ENCODE measurements at regions of chr11 and their contacts with region 1.

Region 1: DNA sequence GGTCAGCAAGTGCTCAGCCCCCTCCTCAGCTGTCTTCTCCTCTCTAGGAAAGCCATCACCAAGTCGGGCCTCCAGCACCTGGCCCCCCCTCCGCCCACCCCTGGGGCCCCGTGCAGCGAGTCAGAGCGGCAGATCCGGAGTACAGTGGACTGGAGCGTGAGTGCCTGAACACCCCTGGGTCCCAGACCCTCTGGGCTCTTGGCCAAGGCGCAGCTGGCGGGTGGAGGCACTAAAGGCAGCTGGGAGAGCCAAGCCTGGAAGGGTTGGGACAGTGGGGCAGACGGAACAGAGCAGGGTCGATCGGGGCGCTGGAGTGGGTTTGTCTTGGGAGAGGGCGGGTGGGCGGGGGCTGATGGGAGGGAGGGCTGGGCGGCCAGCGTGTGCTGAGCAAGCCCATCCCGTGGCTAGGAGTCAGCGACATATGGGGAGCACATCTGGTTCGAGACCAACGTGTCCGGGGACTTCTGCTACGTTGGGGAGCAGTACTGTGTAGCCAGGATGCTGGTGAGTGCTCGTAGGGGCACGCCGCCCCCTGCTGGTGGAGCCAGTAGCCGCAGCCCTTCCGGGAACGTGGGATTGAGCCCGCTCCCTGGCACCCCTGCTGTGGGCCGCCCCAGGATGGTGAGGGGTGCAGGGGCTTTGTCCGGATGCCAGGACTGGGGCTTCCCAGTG is 14.1 kb upstream of the MDK start:
- DNase-seq: peak in 1 of 2 donors; percentile 66
- ATAC-seq: peak in 1 of 2 donors; percentile 18
- H3K4me3 ChIP-seq: no peak overlapping the region
- H3K27ac ChIP-seq: peak overlapping the region; percentile 98 to 100 (median 98)
- H3K4me1 ChIP-seq: peaks cover 49 to 55% of the 10 kb centered on the region in 2 donors
- H3K27me3 ChIP-seq: no peaks in the 10 kb centered on the region
- CTCF ChIP-seq: peak; percentile 92 to 98 (median 96)
- POLR2A ChIP-seq: no peak

Region 2: DNA sequence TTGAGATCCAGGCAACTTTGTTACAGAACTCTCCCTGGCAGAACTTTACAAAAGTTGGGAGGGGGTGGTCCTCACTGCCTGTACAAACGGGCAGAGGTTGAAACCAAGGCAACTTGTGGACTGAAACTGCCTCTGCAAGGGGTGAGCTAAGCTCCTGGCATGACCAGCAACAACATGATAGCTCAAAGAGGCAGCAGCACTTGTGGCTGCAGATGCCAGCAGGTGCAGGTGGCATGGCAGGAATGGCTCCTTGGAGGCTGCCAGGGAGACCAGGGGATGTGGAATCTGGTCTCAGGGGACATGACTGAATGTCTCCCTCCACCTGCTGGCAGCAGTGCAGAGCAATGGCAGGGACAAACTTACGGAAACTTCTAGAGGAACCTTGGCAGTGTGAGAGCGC is 207.3 kb before region 1 on chr11:
- in situ Hi-C with region 1: no loop called
- intact Hi-C with region 1: no loop called
- DNase-seq: no peak
- ATAC-seq: no peak
- H3K4me3 ChIP-seq: no peak overlapping the region
- H3K27ac ChIP-seq: no peak overlapping the region
- H3K4me1 ChIP-seq: no peaks in the 10 kb centered on the region
- H3K27me3 ChIP-seq: peaks cover 4 to 20% (median 12%) of the 10 kb centered on the region in 3 donors
- CTCF ChIP-seq: no peak
- POLR2A ChIP-seq: no peak

Region 3: DNA sequence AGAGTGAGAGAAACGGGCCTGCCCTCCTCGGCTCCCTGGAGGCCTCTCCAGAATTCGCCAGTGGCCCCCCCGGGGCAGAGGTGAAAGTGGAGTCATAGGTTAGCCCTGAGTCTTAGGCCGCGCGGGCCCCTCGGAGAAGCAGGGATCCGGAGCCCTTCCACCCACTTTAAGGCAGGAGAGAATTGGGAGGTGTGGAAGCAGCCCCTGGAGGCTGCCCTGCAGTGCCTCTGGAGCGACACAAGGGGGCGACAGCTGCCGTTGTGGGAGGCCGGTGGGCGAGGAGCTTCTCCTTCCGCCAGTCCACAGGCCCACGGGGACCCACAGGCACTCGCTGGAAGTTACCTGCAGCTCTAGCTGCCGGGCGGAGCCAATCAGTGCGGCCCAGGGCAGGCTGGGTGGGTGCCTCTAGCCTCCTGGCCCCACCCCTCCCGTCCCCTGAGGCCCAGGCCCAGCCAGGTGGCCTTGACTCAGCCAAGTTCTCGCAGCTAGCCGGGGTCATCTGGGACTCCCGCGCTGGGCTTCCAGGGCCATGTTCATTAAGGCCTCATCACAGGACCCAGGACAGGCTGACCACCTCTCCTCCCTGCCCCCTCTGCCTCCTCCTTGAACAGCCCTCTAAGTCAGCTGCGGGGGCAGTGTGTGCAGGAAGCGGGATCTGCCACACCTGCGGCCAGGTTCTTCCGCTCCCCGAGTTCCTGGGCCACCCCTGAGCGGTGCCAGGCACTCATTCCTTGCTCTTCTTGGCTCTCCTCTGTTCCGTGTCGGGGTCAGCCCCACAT is 15.1 kb before region 1 on chr11:
- in situ Hi-C with region 1: no loop called
- intact Hi-C with region 1: loop called (anchors 1 kb)
- DNase-seq: peak; percentile 46 to 76
- ATAC-seq: peak; percentile 59 to 75
- H3K4me3 ChIP-seq: peak overlapping the region; percentile 32 to 46 (median 38)
- H3K27ac ChIP-seq: peak overlapping the region; percentile 68 to 79 (median 74)
- H3K4me1 ChIP-seq: peaks cover 23 to 31% of the 10 kb centered on the region in 2 donors
- H3K27me3 ChIP-seq: no peaks in the 10 kb centered on the region
- CTCF ChIP-seq: peak; percentile 95 to 99 (median 99)
- POLR2A ChIP-seq: no peak

Measured in gastrocnemius medialis (tissue), 4 donors.